Dorsolateral prefrontal cortex (tissue), 120 donors: ENCODE measurements at regions of chr17 and their contacts with region 1.

Region 1: GRCh38 chr17:45828628-45829027 is 16.1 kb upstream of the SPPL2C start:
- DNase-seq: peak in 4 of 10 donors; percentile 22 to 60 (median 36)
- H3K4me3 ChIP-seq: no peak overlapping the region
- H3K27ac ChIP-seq: peak overlapping the region in 23 of 59 donors; percentile 2 to 95 (median 60)
- H3K27me3 ChIP-seq: peaks cover 0 to 3% (median 0%) of the 10 kb centered on the region in 45 donors
- CTCF ChIP-seq: peak in 6 of 56 donors; percentile 10 to 25 (median 16)

Region 2: DNA sequence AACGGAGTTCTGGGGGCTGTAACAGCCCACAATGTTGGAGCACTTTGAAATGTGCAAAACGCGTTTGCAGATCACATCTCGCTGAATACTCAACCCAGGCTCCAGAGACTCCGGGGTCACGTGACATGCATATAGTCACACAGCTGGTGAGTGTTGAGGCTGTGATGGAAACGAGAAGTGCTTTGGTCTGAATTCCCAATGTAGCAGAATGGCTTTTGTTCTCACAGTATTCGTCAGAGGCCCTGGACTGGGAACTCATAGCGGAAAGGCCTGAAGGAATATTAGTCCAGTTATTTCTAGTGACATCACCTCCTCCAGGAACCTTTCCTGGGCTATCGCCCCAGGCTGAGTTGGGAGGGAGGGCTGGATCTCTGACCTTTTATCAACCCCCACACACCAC is 140.3 kb before region 1 on chr17:
- intact Hi-C with region 1: no loop called
- DNase-seq: peak in 5 of 10 donors; percentile 22 to 63 (median 43)
- H3K4me3 ChIP-seq: no peak overlapping the region
- H3K27ac ChIP-seq: peak overlapping the region in 1 of 59 donors; percentile 37
- H3K27me3 ChIP-seq: peaks cover 0 to 5% (median 0%) of the 10 kb centered on the region in 45 donors
- CTCF ChIP-seq: no peak

Region 3: GRCh38 chr17:45719335-45720071 is 109.1 kb before region 1 on chr17:
- intact Hi-C with region 1: loop called (anchors 2 to 5 kb)
- DNase-seq: peak in 9 of 10 donors; percentile 34 to 80 (median 63)
- H3K4me3 ChIP-seq: no peak overlapping the region
- H3K27ac ChIP-seq: peak overlapping the region in 44 of 59 donors; percentile 5 to 87 (median 63)
- H3K27me3 ChIP-seq: no peaks in the 10 kb centered on the region
- CTCF ChIP-seq: peak in 22 of 56 donors; percentile 10 to 50 (median 27)

Region 4: GRCh38 chr17:45782889-45783592 is 45.6 kb before region 1 on chr17:
- intact Hi-C with region 1: loop called (anchors 2 kb)
- DNase-seq: peak in 6 of 10 donors; percentile 25 to 79 (median 61)
- H3K4me3 ChIP-seq: peak overlapping the region; percentile 40 to 84 (median 70)
- H3K27ac ChIP-seq: peak overlapping the region in 55 of 59 donors; percentile 7 to 93 (median 71)
- H3K27me3 ChIP-seq: peaks cover 0 to 27% (median 0%) of the 10 kb centered on the region in 45 donors
- CTCF ChIP-seq: peak; percentile 43 to 86 (median 78)

Region 5: DNA sequence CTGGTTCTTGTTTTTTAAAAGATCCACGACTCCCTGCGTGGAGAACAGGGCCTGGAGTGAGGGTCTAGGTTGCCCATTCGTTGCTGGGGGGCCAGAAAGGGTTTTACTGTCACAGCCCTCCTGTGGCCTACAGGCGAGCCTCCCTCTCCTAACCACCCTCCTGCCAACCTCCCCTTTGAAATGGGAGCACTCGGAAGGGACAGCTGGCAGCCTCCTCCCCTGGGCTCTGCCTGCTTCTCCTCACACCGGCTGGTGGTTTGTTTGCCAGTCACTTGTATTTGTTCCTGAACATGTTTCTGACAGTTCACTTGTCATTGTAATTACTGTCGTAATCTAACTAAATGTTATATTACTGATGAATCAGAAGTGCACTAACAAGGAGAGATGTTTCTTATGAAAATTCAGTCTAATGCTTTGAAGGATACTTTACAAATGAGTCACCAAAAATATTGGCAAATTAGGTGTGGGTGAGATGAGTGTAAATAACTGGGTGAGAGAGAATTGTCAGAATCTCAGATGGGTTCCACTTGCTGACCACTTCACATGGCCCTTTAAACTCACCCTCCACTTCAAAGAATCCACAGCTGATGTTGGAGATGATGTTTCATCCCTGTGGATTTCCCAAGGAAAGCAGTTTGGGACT is 13.4 kb after region 1 on chr17:
- intact Hi-C with region 1: no loop called
- DNase-seq: peak in 1 of 10 donors; percentile 75
- H3K4me3 ChIP-seq: no peak overlapping the region
- H3K27ac ChIP-seq: peak overlapping the region in 1 of 59 donors; percentile 78
- H3K27me3 ChIP-seq: no peaks in the 10 kb centered on the region
- CTCF ChIP-seq: no peak

Region 6: GRCh38 chr17:45902892-45903346 is 74.3 kb after region 1 on chr17:
- intact Hi-C with region 1: no loop called
- DNase-seq: no peak
- H3K4me3 ChIP-seq: peak overlapping the region in 3 of 59 donors; percentile 5 to 16 (median 11)
- H3K27ac ChIP-seq: peak overlapping the region in 57 of 59 donors; percentile 4 to 81 (median 59)
- H3K27me3 ChIP-seq: no peaks in the 10 kb centered on the region
- CTCF ChIP-seq: no peak

Region 7: GRCh38 chr17:46108550-46109110 is 280.0 kb after region 1 on chr17:
- intact Hi-C with region 1: no loop called
- DNase-seq: no peak
- H3K4me3 ChIP-seq: no peak overlapping the region
- H3K27ac ChIP-seq: no peak overlapping the region
- H3K27me3 ChIP-seq: no peaks in the 10 kb centered on the region
- CTCF ChIP-seq: no peak